Activated CD4-positive, alpha-beta T cell treated with anti-CD3 and anti-CD28 coated beads, Interleukin-2, amount 10 ng/mL, durations not matched to agents 24 days and 14 days (primary cell): ENCODE measurements at regions of chr11 and their contacts with region 1.

Region 1: GRCh38 chr11:17276236-17277023 is at the start of gene NUCB2:
- DNase-seq: peak; percentile 99
- H3K4me3 Mint-ChIP-seq: peak within 1 kb of the TSS; percentile 83
- H3K27ac Mint-ChIP-seq: peak within 1 kb of the TSS; percentile 85
- H3K4me1 Mint-ChIP-seq: peaks cover 47% of the 10 kb centered on the region
- H3K27me3 Mint-ChIP-seq: peaks cover 2% of the 10 kb centered on the region
- total RNA-seq, gene NUCB2: 48.6 and 52.7 TPM in 2 replicates

Region 2: DNA sequence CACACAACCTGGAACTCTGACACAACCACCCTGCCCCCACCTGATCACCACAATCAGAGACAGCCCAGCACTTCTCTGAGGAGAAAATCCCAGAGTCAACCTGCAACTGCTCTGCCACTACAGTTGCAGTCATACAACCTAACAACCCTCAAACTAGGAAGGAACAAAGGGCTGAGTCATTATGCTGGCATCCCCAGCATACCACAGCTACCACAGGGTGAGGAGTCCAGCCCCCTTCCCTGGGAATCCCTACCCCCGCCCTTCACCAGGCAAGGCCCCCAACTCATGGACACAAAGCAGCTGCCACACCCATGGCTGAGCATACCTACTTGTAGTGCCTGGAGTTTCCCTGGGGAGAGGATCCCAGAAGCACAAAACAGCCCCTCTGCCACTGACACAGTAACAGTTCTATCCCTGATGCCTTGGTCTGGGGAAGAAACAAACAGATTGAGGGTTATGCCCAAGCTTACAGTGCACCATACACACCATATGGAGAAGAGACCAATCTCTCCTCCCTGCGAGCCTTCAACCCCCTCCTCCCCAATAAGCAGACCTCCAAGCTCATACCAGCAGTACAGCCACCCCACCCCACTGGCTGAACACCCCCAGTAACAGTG is 606.5 kb before region 1 on chr11:
- intact Hi-C with region 1: no loop called
- DNase-seq: no peak
- H3K4me3 Mint-ChIP-seq: no peak overlapping the region
- H3K27ac Mint-ChIP-seq: no peak overlapping the region
- H3K4me1 Mint-ChIP-seq: no peaks in the 10 kb centered on the region
- H3K27me3 Mint-ChIP-seq: no peaks in the 10 kb centered on the region

Region 3: GRCh38 chr11:17077520-17078401 is 198.7 kb before region 1 on chr11 and contains the start of gene RPS13:
- intact Hi-C with region 1: loop called (anchors 1 kb)
- DNase-seq: peak; percentile 98
- H3K4me3 Mint-ChIP-seq: peak within 1 kb of the TSS; percentile 92
- H3K27ac Mint-ChIP-seq: peak within 1 kb of the TSS; percentile 98
- H3K4me1 Mint-ChIP-seq: peaks cover 24% of the 10 kb centered on the region
- H3K27me3 Mint-ChIP-seq: no peaks in the 10 kb centered on the region
- total RNA-seq, gene RPS13: 1,328 and 1,337 TPM in 2 replicates

Region 4: GRCh38 chr11:17230867-17231851 is 45.3 kb before region 1 on chr11:
- intact Hi-C with region 1: loop called (anchors 1 kb)
- DNase-seq: peak; percentile 85
- H3K4me3 Mint-ChIP-seq: peak overlapping the region; percentile 34
- H3K27ac Mint-ChIP-seq: peak overlapping the region; percentile 59
- H3K4me1 Mint-ChIP-seq: peaks cover 13% of the 10 kb centered on the region
- H3K27me3 Mint-ChIP-seq: peaks cover 30% of the 10 kb centered on the region

Region 5: GRCh38 chr11:17314232-17314547 is 37.8 kb after region 1 on chr11:
- intact Hi-C with region 1: loop called (anchors 2 kb)
- DNase-seq: peak; percentile 41
- H3K4me3 Mint-ChIP-seq: no peak overlapping the region
- H3K27ac Mint-ChIP-seq: no peak overlapping the region
- H3K4me1 Mint-ChIP-seq: no peaks in the 10 kb centered on the region
- H3K27me3 Mint-ChIP-seq: no peaks in the 10 kb centered on the region

Region 6: DNA sequence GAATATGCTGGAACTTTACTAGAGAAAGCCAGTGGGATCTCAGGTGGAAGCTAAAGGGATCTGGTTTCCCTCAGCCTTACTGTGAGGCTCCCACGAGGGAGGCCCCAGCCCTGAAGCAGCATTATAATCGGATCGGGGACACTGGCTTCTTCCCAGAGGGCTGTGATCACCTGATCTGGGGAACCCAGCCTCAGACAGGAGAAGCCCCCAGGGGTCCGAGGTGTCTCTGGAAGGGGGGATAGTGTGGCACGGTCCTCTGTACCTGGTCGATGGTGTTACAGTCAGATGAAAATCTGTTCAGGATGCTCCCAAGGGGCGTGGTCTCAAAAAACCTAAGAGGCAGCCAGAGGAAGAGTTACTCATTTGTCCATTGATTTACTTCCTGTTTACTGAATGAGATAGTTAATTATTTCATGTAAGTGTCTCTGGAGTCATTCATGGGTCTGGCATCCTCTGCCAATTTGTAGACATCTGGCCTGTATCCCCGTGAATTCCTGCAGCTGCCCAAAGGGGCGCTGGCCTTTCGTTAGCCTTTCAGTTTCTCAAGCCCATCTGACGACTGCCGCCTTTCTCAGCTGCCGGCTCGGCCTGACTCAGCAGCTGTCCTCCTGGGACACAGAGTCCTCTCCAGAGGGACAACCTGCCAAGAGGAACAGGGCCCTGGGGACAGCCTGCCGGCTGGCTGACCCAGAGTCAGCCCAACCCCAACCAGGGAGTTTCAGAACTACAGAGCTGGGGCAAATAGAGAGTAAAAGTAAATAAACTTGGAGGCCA is 129.0 kb after region 1 on chr11:
- intact Hi-C with region 1: no loop called
- DNase-seq: no peak
- H3K4me3 Mint-ChIP-seq: no peak overlapping the region
- H3K27ac Mint-ChIP-seq: no peak overlapping the region
- H3K4me1 Mint-ChIP-seq: no peaks in the 10 kb centered on the region
- H3K27me3 Mint-ChIP-seq: peaks cover 4% of the 10 kb centered on the region

Region 7: GRCh38 chr11:18012863-18013781 is 736.7 kb after region 1 on chr11 and contains the start of gene SERGEF:
- intact Hi-C with region 1: loop called (anchors 10 kb)
- DNase-seq: peak; percentile 98
- H3K4me3 Mint-ChIP-seq: peak within 1 kb of the TSS; percentile 90
- H3K27ac Mint-ChIP-seq: peak within 1 kb of the TSS; percentile 92
- H3K4me1 Mint-ChIP-seq: peaks cover 37% of the 10 kb centered on the region
- H3K27me3 Mint-ChIP-seq: peaks cover 3% of the 10 kb centered on the region
- total RNA-seq, gene SERGEF: 26.2 and 35.8 TPM in 2 replicates